Lower leg skin (tissue), 4 donors: ENCODE measurements at regions of chr19 and their contacts with region 1.

Region 1: DNA sequence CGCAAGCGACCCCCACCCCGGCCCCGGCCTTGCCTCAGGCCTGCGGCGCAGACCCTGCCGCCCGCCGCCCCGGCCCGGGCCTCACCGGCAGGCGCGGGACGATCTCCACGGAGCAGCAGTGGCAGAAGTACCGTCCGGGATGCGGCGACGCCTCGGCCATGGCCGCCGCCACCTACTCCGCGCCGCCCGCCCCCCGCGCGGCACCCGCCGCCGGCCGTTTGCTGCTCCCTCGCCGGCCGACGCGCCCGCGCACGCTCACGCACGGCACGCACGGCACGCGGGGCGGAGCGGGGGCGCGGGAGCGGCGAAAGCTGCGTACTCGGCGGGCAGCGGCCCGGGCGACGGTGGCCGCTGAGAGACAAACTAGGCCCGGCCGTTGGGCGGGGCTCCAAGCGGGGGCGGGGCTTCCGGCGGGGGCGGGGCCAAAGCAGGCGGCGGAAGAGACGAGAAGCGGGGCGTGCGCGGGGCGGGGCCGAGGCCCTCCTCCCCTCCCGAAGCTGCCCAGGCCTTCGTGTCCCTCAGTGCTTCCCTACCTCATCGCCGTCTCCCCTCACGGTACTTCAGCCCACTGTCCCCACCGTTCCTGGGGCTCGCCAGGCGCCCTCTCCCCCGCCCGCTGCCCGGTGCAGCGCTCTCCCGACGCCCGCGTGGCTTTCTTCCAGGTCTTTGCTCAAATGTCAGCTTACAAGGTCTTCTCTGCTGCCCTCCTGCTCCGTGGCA is at the start of gene RNF126:
- DNase-seq: peak; percentile 92 to 98
- H3K4me3 ChIP-seq: peak within 1 kb of the TSS; percentile 97
- CTCF ChIP-seq: no peak
- POLR2A ChIP-seq: no peak
- total RNA-seq, gene RNF126: 96.6 to 156 (median 126) TPM

Region 2: GRCh38 chr19:572140-572742 is 90.9 kb before region 1 on chr19 and contains the start of gene BSG:
- intact Hi-C with region 1: loop called (anchors 5 kb)
- DNase-seq: peak; percentile 98 to 100
- H3K4me3 ChIP-seq: peak within 1 kb of the TSS; percentile 81
- CTCF ChIP-seq: no peak
- POLR2A ChIP-seq: peak in 1 of 2 donors; percentile 89
- total RNA-seq, gene BSG: 288 to 344 (median 307) TPM

Region 3: DNA sequence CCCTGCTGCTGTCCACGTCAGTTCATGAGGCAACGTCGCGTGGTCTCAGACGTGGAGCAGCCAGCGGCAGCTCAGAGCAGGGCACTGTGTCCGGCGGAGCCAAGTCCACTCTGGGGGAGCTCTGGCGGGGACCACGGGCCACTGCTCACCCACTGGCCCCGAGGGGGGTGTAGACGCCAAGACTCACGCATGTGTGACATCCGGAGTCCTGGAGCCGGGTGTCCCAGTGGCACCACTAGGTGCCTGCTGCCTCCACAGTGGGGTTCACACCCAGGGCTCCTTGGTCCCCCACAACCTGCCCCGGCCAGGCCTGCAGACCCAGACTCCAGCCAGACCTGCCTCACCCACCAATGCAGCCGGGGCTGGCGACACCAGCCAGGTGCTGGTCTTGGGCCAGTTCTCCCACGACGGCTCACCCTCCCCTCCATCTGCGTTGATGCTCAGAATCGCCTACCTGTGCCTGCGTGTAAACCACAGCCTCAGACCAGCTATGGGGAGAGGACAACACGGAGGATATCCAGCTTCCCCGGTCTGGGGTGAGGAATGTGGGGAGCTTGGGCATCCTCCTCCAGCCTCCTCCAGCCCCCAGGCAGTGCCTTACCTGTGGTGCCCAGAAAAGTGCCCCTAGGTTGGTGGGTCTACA is 19.7 kb after region 1 on chr19:
- intact Hi-C with region 1: no loop called
- DNase-seq: no peak
- H3K4me3 ChIP-seq: no peak overlapping the region
- CTCF ChIP-seq: no peak
- POLR2A ChIP-seq: no peak

Region 4: DNA sequence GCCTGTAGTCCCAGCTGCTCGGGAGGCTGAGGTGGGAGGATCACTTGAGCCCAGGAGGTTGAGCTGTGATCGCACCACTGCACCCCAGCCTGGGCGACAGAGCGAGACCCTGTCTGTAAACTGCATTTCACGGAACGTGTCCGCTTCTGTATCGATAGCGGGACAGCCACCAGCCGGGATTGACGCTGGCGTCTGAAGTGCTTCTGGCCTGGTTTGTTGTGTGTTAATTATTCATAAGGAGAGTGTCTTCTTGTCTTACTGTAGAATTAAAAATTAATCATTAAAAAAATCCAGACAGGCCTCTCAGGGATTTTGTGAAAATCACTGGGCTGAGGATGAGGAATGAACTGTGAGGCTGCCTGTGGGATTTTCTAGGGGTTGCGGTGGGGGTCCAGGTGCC is 71.6 kb after region 1 on chr19:
- intact Hi-C with region 1: loop called (anchors 2 kb)
- DNase-seq: no peak
- H3K4me3 ChIP-seq: no peak overlapping the region
- CTCF ChIP-seq: no peak
- POLR2A ChIP-seq: no peak